ENCODE measurements at regions of chr2 and their contacts with region 1.

Region 1: GRCh38 chr2:121907928-121908327 is 152.5 kb downstream of the TSN start:
- DNase-seq: no peak
- H3K4me3 Mint-ChIP-seq: no peak overlapping the region
- H3K27ac Mint-ChIP-seq: no peak overlapping the region
- H3K4me1 Mint-ChIP-seq: peaks cover 5% of the 10 kb centered on the region
- H3K27me3 Mint-ChIP-seq: no peaks in the 10 kb centered on the region
- CTCF ChIP-seq: no peak

Region 2: DNA sequence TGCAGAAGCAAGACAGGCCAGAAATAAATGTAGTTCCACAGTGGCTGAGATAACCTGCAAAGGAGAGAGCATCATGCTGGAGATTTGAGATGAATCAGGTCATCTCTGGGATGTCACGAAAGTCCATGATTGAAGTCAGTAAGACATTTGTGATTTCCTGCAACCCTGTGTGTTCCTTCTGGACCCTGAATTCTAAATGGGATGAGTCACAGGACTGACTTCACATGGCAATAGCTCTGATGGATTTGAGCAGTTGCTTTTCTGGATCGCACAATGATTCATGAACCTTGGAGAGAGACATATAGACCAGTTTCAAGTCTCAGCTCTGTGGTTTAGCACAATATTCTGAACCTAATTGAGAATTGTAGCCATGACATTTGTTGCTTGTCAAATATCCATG is 49.6 kb before region 1 on chr2:
- CTCF ChIA-PET with region 1: no interaction called
- POLR2A ChIA-PET with region 1: no interaction called
- intact Hi-C with region 1: no loop called
- DNase-seq: no peak
- H3K4me3 Mint-ChIP-seq: no peak overlapping the region
- H3K27ac Mint-ChIP-seq: no peak overlapping the region
- H3K4me1 Mint-ChIP-seq: peaks cover 11% of the 10 kb centered on the region
- H3K27me3 Mint-ChIP-seq: peaks cover 42% of the 10 kb centered on the region
- CTCF ChIP-seq: no peak

Region 3: DNA sequence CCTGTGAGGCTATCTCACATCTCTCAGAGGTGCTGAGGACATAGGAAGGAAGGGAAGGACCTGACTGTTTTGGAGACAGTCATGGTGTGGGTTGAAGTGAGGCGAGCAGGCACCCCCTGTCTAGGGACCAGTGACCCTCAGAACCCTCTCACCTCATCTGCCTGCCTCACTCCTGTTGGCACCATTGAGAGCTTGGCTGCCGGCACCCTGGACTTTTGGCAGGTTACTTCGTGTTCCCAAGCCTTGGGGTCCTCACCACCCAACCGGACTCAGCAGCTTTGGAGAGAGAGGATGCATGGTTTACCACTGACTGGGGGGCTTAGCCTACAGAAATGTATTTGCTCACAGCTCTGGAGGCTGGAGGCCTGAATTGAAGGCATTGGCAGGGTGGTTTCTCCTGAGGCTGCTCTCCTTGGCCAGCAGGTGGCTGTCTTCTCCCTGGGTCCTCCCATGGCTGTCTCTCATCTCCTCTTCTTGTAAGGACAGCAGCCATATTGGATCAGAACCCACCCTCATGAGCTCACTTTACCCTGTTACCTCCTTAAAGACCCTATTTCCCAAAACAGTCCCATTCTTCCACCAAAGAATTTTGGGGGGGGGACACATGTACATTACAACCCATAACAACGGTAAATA is 10.5 kb before region 1 on chr2:
- CTCF ChIA-PET with region 1: interaction called, 13 read pairs
- POLR2A ChIA-PET with region 1: interaction called, 3 read pairs
- intact Hi-C with region 1: no loop called
- DNase-seq: peak; percentile 65
- H3K4me3 Mint-ChIP-seq: no peak overlapping the region
- H3K27ac Mint-ChIP-seq: no peak overlapping the region
- H3K4me1 Mint-ChIP-seq: peaks cover 9% of the 10 kb centered on the region
- H3K27me3 Mint-ChIP-seq: no peaks in the 10 kb centered on the region
- CTCF ChIP-seq: peak; percentile 53